A549 (cell line): ENCODE measurements at regions of chr19 and their contacts with region 1.

Region 1: DNA sequence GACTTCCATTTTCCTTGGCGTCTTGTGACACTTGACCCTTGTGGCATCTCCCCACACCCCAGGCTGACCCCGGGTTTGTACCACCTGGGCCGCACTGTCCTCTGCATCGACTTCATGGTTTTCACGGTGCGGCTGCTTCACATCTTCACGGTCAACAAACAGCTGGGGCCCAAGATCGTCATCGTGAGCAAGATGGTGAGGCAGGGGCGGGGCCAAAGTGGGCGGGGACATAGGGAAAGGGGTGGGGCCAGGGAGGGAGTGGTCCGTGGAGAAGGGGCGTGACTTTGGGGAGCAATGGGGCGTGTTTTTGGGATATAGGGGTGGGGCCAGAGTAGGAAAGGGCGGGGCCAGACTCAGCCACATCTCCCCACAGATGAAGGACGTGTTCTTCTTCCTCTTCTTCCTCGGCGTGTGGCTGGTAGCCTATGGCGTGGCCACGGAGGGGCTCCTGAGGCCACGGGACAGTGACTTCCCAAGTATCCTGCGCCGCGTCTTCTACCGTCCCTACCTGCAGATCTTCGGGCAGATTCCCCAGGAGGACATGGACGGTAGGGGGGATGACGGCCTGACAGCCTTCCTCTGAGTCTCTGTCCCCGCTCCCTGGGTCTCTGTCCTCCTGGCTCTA is 42.8 kb downstream of the TRPM4 start:
- DNase-seq: peak; percentile 58
- ATAC-seq: peak; percentile 64 to 80; a peak in 5 of 6 replicates
- H3K4me3 ChIP-seq: no peak overlapping the region
- H3K27ac ChIP-seq: no peak overlapping the region
- H3K4me1 ChIP-seq: peaks cover 4% of the 10 kb centered on the region; the same call in 1 of the 3 replicates
- CTCF ChIP-seq: no peak
- EP300 ChIP-seq: no peak
- POLR2A ChIP-seq: no peak
- RAD21 ChIP-seq: no peak

Region 2: DNA sequence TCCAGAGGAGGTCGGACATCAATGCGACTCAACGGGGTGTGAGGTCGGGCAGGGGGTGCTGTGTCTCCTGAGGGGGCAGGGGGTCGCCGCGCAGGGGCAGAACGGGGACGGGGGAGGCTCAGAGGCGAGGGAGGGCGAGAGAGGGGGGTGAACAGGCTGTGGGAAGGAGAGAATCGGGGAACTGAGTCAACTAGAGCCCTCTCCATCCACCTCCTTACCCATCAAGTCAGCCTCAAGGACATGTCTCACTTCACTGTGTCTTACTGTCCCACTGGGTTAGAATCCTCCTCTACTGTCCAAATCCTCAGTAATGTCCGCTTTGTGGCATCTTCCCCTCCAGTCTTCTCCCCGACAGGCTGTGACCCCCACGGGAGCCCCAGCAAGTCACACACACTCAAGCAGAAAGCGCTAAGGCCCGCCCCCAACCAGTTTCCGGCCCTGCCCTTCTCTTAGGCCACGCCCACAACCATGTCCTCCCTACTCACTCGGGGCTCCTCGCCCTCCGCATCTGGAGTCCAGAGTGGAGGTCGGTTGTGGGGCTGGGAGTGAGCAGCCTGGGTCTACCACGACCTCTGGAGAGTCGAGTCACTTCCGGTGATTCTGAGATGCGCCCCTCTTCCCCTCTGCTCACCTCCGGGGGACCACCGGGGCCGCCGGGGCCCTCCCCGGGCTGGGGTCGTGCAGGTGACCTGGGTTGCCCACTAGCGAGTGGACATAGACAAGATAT is 341.2 kb before region 1 on chr19:
- CTCF ChIA-PET with region 1: no interaction called
- POLR2A ChIA-PET with region 1: no interaction called
- DNase-seq: no peak
- ATAC-seq: peak; percentile 22 to 58; a peak in 4 of 6 replicates
- H3K4me3 ChIP-seq: no peak overlapping the region
- H3K27ac ChIP-seq: no peak overlapping the region
- H3K4me1 ChIP-seq: no peaks in the 10 kb centered on the region
- CTCF ChIP-seq: no peak
- EP300 ChIP-seq: no peak
- POLR2A ChIP-seq: no peak
- RAD21 ChIP-seq: no peak

Region 3: DNA sequence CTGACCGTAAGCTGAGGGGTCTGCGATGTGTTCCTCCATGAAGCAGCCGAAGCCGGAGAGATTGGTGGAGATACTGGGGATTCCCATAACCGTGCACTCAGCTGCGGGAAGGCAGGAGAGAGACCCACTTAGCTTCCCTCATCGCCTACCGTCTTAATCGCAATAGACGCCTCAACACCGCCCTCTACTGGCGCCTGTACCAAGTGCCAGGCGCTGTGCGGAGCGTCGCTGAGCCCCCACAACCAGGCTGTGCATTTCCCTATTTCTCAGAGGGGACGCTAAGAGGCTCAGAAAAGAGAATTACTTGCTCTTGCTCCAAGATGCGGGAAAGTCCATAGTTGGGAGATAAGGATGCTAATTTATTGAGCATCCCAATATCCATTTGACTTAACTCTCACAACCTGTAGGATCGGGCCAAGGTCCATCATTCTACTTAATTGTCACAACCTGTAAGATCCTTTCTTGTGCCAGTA is 229.4 kb before region 1 on chr19:
- CTCF ChIA-PET with region 1: no interaction called
- POLR2A ChIA-PET with region 1: no interaction called
- DNase-seq: peak; percentile 86 to 88
- ATAC-seq: peak; percentile 25 to 55
- H3K4me3 ChIP-seq: no peak overlapping the region
- H3K27ac ChIP-seq: peak overlapping the region in 1 of 2 experiments; percentile 63; a peak in 3 of 6 replicates
- H3K4me1 ChIP-seq: peaks cover 23% of the 10 kb centered on the region
- CTCF ChIP-seq: peak; percentile 98
- EP300 ChIP-seq: no peak
- POLR2A ChIP-seq: no peak
- RAD21 ChIP-seq: peak; percentile 96 to 97

Region 4: GRCh38 chr19:49014123-49014869 is 186.1 kb before region 1 on chr19:
- CTCF ChIA-PET with region 1: no interaction called
- POLR2A ChIA-PET with region 1: no interaction called
- DNase-seq: no peak
- ATAC-seq: no peak
- H3K4me3 ChIP-seq: no peak overlapping the region
- H3K27ac ChIP-seq: no peak overlapping the region
- H3K4me1 ChIP-seq: peaks cover 10% of the 10 kb centered on the region; the same call in 2 of the 3 replicates
- CTCF ChIP-seq: no peak
- EP300 ChIP-seq: no peak
- POLR2A ChIP-seq: no peak
- RAD21 ChIP-seq: no peak

Region 5: DNA sequence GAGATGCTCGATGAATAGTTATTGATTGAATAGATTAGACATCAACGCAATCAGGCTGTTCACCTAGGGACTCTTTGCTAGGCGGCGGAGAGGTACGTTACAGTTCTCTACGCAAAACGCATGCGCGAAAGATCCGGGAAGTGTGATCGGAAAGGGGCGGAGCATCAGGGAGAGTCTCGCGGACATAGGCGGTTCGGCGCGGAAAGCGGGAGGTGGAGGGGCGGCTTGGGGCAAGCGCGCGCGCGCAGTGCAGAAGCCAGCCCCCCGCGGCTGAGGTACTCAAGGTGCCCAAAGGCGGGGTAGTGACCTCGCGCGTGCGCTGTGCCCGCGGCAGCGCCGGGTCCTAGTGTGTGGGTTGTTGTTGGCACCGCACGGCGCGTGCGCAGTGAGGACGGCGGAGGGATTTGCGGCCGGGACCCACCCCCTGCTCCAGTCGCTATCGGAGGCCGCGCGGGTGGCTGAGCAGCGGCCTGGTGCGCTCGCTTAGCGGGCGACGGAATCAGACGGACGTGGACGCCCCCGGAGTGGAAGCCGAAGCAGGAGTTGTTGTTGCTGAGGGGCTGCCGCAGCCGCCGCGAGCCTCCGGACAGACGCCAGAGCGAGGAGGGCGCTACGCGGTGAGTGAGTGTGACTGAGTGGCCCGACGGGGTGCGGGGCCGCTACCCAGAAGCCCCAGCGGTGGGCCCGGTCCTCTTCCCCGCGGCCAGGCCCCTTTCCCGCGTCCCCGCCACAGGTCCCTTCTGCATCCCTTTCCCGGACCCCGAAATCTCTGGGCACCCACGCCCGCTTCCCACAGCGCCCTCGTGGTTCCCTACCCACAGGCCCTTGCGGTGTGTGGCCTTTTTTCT is 115.1 kb before region 1 on chr19 and contains the start of gene SNRNP70:
- CTCF ChIA-PET with region 1: interaction called, 10 read pairs
- POLR2A ChIA-PET with region 1: no interaction called
- DNase-seq: peak; percentile 100
- ATAC-seq: peak; percentile 94 to 95
- H3K4me3 ChIP-seq: peak within 1 kb of the TSS; percentile 73
- H3K27ac ChIP-seq: peak within 1 kb of the TSS; percentile 88 to 91
- H3K4me1 ChIP-seq: peaks cover 20% of the 10 kb centered on the region
- CTCF ChIP-seq: no peak
- EP300 ChIP-seq: no peak
- POLR2A ChIP-seq: peak; percentile 94
- RAD21 ChIP-seq: no peak
- polyA plus RNA-seq, gene SNRNP70: 214 and 220 TPM in 2 replicates

Region 6: GRCh38 chr19:49106648-49107135 is 93.7 kb before region 1 on chr19:
- CTCF ChIA-PET with region 1: interaction called, 16 read pairs
- POLR2A ChIA-PET with region 1: interaction called, 4 read pairs
- DNase-seq: peak; percentile 69 to 87
- ATAC-seq: peak; percentile 63 to 80
- H3K4me3 ChIP-seq: no peak overlapping the region
- H3K27ac ChIP-seq: peak overlapping the region in 1 of 2 experiments; percentile 51; a peak in 4 of 6 replicates
- H3K4me1 ChIP-seq: peaks cover 18% of the 10 kb centered on the region
- CTCF ChIP-seq: peak; percentile 93
- EP300 ChIP-seq: no peak
- POLR2A ChIP-seq: no peak
- RAD21 ChIP-seq: peak; percentile 40 to 45; a peak in 4 of 5 replicates

Region 7: DNA sequence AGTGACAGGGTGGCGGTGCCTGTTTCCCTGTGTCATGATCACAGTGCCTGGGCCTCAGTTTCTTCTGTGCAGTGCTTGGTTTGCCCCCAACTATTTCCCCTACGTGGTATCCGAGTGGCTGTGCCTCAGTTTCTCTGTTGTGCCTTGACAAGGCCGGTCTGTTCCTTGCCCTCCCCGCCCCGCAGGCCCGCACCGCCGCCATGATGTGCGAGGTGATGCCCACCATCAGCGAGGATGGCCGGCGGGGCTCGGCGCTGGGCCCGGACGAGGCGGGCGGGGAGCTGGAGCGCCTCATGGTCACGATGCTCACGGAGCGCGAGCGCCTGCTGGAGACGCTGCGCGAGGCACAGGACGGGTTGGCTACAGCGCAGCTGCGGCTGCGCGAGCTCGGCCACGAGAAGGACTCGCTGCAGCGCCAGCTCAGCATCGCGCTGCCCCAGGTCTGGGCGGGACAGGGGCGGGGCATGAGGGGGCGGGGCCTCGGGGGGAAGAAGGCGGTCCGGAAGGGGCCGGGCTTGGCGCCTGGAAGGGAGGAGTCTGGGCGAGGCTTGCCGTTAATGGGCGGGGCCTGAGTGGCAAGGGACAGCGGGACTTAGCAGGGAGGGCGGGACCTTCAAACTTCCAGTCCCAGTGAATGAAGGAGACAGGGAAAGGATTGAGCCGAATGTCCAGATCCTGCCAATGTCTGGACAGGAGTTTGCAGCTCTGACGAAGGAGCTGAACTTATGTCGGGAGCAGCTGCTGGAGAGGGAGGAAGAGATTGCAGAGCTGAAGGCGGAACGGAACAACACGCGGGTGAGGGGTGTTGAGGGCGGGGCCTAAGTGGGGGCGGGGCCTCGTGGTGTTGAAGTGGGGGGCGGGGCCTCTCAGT is 72.4 kb before region 1 on chr19:
- CTCF ChIA-PET with region 1: interaction called, 10 read pairs
- POLR2A ChIA-PET with region 1: interaction called, 4 read pairs
- DNase-seq: peak; percentile 99
- ATAC-seq: peak; percentile 89 to 97
- H3K4me3 ChIP-seq: peak overlapping the region; percentile 40
- H3K27ac ChIP-seq: peak overlapping the region; percentile 62 to 80
- H3K4me1 ChIP-seq: peaks cover 9% of the 10 kb centered on the region; the same call in 2 of the 3 replicates
- CTCF ChIP-seq: 0 out of 3 replicates have a peak, but pooled peaks have one; percentile 13
- EP300 ChIP-seq: no peak
- POLR2A ChIP-seq: peak; percentile 82
- RAD21 ChIP-seq: no peak

Region 8: DNA sequence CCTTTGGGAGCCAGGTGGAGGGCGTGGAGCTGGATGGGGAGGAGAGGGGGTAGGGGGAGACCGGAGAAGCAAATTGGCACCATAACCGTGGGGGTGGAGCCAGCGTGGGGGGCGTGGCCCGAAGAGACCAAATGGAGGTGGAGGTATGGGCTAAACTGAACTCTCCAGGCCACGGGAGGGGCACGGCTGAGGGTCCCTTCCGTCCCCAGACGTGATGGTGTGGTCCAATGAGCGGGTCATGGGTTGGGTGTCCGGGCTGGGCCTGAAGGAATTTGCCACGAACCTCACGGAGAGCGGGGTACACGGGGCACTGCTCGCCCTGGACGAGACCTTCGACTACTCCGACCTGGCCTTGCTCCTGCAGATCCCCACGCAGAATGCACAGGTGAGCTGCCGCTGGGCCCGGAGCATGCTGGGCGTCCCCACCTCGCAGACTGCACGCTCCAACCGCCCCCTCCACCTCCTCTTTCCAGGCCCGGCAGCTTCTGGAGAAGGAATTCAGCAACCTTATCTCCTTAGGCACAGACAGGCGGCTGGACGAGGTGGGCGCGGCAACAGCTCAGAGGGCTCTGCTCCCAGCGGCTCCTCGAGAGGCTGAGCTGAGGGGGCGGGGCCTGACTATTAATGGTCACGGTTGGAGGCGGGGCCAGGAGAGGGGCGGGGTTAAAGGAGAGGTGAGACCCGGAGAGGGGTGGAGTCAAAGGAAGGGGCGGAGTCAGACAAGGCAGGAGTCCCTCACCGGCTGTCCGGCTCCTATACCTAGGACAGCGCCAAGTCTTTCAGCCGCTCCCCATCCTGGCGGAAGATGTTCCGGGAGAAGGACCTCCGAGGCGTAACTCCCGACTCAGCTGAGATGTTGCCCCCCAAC is 51.3 kb before region 1 on chr19:
- CTCF ChIA-PET with region 1: interaction called, 78 read pairs
- POLR2A ChIA-PET with region 1: no interaction called
- DNase-seq: peak; percentile 96 to 98
- ATAC-seq: peak; percentile 32 to 71
- H3K4me3 ChIP-seq: peak overlapping the region; percentile 68
- H3K27ac ChIP-seq: peak overlapping the region; percentile 76 to 83
- H3K4me1 ChIP-seq: peaks cover 31% of the 10 kb centered on the region
- CTCF ChIP-seq: no peak
- EP300 ChIP-seq: no peak
- POLR2A ChIP-seq: peak; percentile 33; the same call in 1 of the 2 replicates
- RAD21 ChIP-seq: no peak

Region 9: DNA sequence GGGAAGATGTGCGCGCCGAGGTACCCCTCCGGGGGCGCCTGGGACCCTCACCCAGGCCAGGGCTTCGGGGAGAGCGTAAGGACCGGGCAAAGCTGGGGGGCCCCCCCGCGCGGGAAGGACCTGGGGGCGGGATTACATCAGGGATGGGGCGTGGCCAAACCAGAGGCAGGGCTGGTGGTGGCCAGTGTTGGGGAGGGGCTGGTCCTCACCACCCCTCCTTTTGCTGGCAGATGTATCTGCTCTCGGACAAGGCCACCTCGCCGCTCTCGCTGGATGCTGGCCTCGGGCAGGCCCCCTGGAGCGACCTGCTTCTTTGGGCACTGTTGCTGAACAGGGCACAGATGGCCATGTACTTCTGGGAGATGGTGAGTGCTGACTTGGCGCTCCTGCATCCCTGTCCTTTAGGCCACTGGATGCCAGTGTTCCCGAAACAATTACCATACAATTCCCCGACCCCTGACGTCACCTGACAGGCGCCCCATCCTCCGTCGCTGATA is 17.5 kb before region 1 on chr19:
- CTCF ChIA-PET with region 1: interaction called, 69 read pairs
- POLR2A ChIA-PET with region 1: no interaction called
- DNase-seq: no peak
- ATAC-seq: no peak
- H3K4me3 ChIP-seq: no peak overlapping the region
- H3K27ac ChIP-seq: no peak overlapping the region
- H3K4me1 ChIP-seq: no peaks in the 10 kb centered on the region
- CTCF ChIP-seq: no peak
- EP300 ChIP-seq: no peak
- POLR2A ChIP-seq: no peak
- RAD21 ChIP-seq: no peak

Region 10: DNA sequence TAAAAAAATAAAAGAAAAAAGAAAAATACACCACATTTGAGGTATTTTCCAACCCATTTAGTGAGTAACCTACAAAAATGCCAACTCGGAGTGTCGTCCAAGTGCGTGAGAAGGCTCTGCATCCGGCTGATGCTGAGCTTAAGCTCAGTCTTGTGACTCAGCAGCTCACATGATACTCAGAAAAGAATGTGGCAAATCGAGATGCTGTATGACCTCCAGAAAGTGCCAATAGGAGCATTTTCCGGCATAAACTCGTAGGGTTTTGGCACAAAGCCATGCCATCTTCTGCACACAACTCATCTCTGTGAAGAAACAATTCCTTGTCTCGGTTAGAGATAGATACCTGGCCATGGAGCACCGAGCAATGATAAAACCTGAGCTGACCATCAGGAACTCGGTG is 15.7 kb after region 1 on chr19:
- CTCF ChIA-PET with region 1: interaction called, 81 read pairs
- POLR2A ChIA-PET with region 1: no interaction called
- DNase-seq: peak in 1 of 2 experiments; percentile 37
- ATAC-seq: 0 out of 6 replicates have a peak, but pooled peaks of 1 of the 2 experiments have one; percentile 13
- H3K4me3 ChIP-seq: no peak overlapping the region
- H3K27ac ChIP-seq: no peak overlapping the region
- H3K4me1 ChIP-seq: no peaks in the 10 kb centered on the region
- CTCF ChIP-seq: no peak
- EP300 ChIP-seq: no peak
- POLR2A ChIP-seq: no peak
- RAD21 ChIP-seq: no peak

Region 11: GRCh38 chr19:49363268-49364082 is 163.1 kb after region 1 on chr19 and contains the start of gene DKKL1:
- CTCF ChIA-PET with region 1: no interaction called
- POLR2A ChIA-PET with region 1: no interaction called
- DNase-seq: peak; percentile 98 to 100
- ATAC-seq: peak; percentile 78 to 90
- H3K4me3 ChIP-seq: peak within 1 kb of the TSS; percentile 88
- H3K27ac ChIP-seq: peak within 1 kb of the TSS; percentile 87 to 90
- H3K4me1 ChIP-seq: peaks cover 15% of the 10 kb centered on the region; the same call in 2 of the 3 replicates
- CTCF ChIP-seq: peak; percentile 18; the same call in 1 of the 3 replicates
- EP300 ChIP-seq: no peak
- POLR2A ChIP-seq: peak; percentile 30; the same call in 1 of the 2 replicates
- RAD21 ChIP-seq: 0 out of 5 replicates have a peak, but pooled peaks of 1 of the 2 experiments have one; percentile 23
- polyA plus RNA-seq, gene DKKL1: 0.53 and 0.91 TPM in 2 replicates